AG04450 (cell line): ENCODE measurements at regions of chr4 and their contacts with region 1.

Region 1: GRCh38 chr4:99723612-99724011 is 66.0 kb upstream of the C4orf54 start:
- DNase-seq: peak; percentile 63
- H3K4me3 ChIP-seq: no peak overlapping the region
- H3K27ac ChIP-seq: no peak overlapping the region
- H3K27me3 ChIP-seq: no peaks in the 10 kb centered on the region
- CTCF ChIP-seq: no peak

Region 2: DNA sequence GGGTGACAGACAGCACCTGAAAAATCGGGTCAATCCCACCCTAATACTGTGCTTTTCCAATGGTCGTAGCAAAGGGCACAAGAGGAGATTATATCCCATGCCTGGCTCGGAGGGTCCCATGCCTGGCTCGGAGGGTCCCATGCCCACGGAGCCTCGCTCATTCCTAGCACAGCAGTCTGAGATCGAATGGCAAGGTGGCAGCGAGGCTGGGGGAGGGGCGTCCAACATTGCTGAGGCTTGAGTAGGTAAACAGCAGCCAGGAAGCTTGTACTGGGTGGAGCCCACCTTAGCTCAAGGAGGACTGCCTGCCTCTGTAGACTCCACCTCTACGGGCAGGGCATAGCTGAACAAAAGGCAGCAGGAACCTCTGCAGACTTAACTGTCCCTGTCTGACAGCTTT is 1945.4 kb before region 1 on chr4:
- CTCF ChIA-PET with region 1: no interaction called
- POLR2A ChIA-PET with region 1: no interaction called
- DNase-seq: no peak
- H3K4me3 ChIP-seq: no peak overlapping the region
- H3K27ac ChIP-seq: no peak overlapping the region
- H3K27me3 ChIP-seq: no peaks in the 10 kb centered on the region
- CTCF ChIP-seq: no peak

Region 3: DNA sequence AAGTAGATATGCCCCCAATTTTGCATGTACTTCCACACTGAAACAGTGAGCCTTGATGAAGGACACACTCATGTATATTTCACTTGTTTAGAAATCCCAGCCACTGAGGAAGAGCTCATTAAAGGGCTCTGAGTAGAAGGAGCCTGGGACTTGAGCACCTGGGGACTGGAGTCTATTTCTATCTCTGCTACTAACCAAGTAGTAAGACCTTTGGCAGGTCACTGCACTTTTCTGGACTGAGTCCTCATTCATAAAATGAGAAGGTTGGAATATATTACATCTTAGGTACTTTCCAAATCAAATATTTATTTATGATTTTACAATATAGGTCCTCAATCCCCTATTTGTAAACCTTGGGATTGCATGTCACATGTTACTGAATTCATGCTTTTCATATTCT is 12.2 kb after region 1 on chr4:
- CTCF ChIA-PET with region 1: interaction called, 10 read pairs
- POLR2A ChIA-PET with region 1: no interaction called
- DNase-seq: no peak
- H3K4me3 ChIP-seq: no peak overlapping the region
- H3K27ac ChIP-seq: no peak overlapping the region
- H3K27me3 ChIP-seq: no peaks in the 10 kb centered on the region
- CTCF ChIP-seq: no peak